ENCODE measurements at regions of chr20 and their contacts with region 1.

Region 1: DNA sequence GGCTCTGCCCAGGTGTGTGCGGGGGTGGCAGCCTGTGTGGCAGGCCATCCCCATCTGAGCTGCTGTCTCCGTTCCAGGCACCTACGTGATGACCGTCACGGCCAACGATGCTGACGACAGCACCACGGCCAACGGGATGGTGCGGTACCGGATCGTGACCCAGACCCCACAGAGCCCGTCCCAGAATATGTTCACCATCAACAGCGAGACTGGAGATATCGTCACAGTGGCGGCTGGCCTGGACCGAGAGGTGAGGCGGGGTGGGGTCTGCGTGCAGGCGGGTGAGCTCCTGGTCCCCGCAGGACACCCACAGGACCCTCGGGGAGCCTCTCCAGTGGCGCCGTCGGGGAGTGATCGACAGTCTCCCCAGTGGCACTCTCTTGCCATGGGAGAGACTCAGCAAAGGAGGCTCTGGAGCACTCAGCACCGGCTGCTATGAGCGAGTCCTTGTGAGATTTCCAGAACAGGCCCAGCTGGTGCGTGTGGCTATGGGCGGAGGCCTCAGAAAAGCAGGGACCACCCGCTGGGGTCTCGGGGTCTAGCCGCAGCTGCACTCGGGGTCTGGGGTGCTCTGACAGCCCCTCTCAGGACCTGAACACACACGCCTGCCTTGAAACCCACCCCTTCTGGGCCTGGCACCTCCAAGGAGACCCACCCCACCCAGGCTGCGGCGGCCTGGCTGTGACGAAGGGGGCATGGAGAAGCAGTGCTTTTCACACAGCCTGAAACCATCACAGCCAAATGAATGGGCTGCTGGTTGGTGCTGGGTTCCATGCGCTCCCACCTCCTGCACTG is 191.8 kb downstream of the TAF4 start:
- DNase-seq: no peak
- ATAC-seq: no peak
- H3K4me3 ChIP-seq: no peak overlapping the region
- H3K27ac ChIP-seq: no peak overlapping the region
- H3K4me1 ChIP-seq: no peaks in the 10 kb centered on the region
- CTCF ChIP-seq: no peak
- EP300 ChIP-seq: no peak
- POLR2A ChIP-seq: no peak
- RAD21 ChIP-seq: no peak

Region 2: DNA sequence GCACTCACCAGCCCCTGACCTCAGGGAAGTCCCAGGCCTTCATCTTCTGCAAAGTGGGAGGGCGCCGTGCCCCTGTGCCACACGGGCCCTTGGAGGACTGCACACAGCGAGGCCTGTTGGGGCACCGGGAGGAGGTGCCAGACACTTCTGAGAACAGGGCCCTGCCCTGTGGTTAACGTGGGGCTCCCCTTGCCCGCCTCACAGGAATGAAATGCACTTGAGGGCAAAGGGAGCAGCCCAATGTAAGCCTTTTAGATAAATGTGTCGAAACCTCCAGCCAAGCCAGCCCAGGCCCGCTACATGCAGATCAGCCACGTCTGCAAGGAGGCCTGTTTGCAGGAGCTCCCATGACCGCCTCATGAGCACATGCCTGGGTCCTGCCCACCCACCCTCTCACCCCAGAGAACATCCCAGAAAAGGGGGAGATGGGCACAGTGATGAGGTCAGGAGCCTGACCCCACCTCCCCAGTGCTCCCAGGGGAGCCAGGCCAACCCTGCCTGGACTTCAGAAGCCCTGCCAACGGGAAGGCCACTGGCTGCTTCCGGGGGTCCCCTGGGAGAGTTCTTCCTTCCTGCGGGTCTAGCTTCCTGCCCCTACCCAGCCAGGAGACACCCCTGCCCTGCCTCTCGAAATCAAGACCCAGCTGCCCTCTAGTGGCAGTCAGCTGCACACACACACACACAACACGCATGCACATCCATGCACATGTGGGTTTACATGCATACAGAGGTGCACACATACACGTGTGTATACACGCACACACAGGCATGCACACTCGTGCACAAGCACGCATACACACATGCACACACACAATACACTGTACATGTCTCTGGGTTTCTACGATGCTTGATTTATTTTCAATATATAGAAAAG is 13.1 kb after region 1 on chr20:
- CTCF ChIA-PET with region 1: interaction called, 27 read pairs
- POLR2A ChIA-PET with region 1: no interaction called
- DNase-seq: peak; percentile 45 to 57
- ATAC-seq: peak; percentile 77 to 90; a peak in 5 of 6 replicates
- H3K4me3 ChIP-seq: no peak overlapping the region
- H3K27ac ChIP-seq: no peak overlapping the region
- H3K4me1 ChIP-seq: no peaks in the 10 kb centered on the region
- CTCF ChIP-seq: peak; percentile 71
- EP300 ChIP-seq: no peak
- POLR2A ChIP-seq: no peak
- RAD21 ChIP-seq: peak; percentile 70 to 74

Region 3: GRCh38 chr20:61912665-61913422 is 39.0 kb after region 1 on chr20:
- CTCF ChIA-PET with region 1: no interaction called
- POLR2A ChIA-PET with region 1: no interaction called
- DNase-seq: no peak
- ATAC-seq: no peak
- H3K4me3 ChIP-seq: no peak overlapping the region
- H3K27ac ChIP-seq: no peak overlapping the region
- H3K4me1 ChIP-seq: no peaks in the 10 kb centered on the region
- CTCF ChIP-seq: no peak
- EP300 ChIP-seq: no peak
- POLR2A ChIP-seq: no peak
- RAD21 ChIP-seq: no peak